Activated T-helper 2 cell treated with anti-CD3 and anti-CD28 coated beads, Interferon-gamma antibody, Interleukin-2, Interleukin-4, amounts not matched to agents 10 μg/mL and 5 μg/mL and 100 μg/mL, durations not matched to agents 14 hours and 24 hours and 36 hours (primary cell): ENCODE measurements at regions of chr22 and their contacts with region 1.

Region 1: DNA sequence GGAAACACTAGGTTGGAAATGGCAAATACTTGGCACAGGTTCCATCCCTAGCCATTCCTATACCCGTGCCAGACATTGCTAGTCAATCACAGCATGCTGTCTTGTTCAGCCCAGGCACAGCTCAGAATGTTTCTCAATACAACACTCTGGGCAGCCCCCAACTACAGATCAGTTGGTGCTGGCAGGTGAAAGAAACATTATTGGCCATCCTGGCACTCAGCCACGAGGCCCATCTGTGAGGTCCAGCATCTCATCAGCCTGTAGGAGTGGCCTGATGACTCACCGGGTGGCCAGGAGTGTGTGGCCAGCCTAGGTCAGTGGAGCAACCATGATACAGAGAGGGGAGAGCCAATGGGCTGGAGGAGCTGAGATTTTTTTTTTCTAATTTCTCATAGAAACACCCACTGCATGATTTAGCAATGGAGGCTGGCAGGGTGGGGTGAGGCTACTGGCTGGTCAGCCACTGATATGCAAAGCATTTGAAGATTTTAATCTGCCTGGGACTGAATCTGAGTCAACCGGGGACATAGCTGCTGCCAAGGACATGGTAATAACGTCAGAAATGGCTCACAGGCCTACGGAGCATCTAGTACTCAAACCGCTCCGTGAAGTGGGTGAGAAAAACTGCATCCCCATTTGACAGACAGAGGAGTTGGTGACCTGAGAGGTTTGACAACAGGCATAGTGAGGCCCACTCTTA is 5.4 kb downstream of the MYO18B start:
- DNase-seq: no peak
- H3K4me3 Mint-ChIP-seq: no peak overlapping the region
- H3K27ac Mint-ChIP-seq: peak overlapping the region; percentile 100
- H3K4me1 Mint-ChIP-seq: peaks cover 82% of the 10 kb centered on the region
- H3K27me3 Mint-ChIP-seq: no peaks in the 10 kb centered on the region

Region 2: DNA sequence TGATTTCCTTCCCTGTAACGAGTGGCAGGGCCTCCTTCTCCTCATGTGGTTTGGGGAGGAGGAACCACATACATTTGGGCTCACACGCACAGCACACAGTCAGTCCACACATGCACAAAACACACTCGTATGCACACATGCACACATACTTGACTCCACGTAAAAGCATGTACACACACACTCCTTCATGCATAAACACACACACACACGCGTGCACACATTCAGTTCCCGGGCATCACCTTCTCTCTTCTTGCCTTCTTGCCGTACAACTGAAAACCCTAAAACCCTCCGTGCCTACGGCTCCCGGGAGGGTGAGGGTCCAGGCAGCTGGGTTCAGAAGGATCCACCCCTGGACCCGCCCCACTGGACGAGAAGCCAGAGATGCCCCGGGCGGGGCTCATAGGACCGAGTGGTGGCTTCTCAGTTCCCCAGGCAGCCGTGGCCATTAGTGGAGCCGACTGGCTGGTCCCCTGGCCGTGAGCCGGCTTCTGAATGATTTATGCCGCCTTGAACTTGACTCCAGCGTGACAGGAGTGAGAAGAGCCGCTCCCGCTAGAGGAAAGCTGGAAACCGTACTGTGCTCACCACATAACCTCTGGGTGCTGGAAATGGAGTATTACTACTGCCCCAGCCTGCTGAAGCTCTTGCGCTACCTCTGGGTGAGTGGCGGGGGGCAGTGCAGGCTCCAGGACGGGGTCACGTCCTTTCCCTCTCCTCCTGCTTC is 677.5 kb before region 1 on chr22:
- intact Hi-C with region 1: loop called (anchors 5 kb)
- DNase-seq: peak; percentile 22
- H3K4me3 Mint-ChIP-seq: peak overlapping the region; percentile 84
- H3K27ac Mint-ChIP-seq: peak overlapping the region; percentile 95
- H3K4me1 Mint-ChIP-seq: peaks cover 65% of the 10 kb centered on the region
- H3K27me3 Mint-ChIP-seq: no peaks in the 10 kb centered on the region

Region 3: GRCh38 chr22:25554238-25554671 is 193.1 kb before region 1 on chr22:
- intact Hi-C with region 1: no loop called
- DNase-seq: no peak
- H3K4me3 Mint-ChIP-seq: no peak overlapping the region
- H3K27ac Mint-ChIP-seq: no peak overlapping the region
- H3K4me1 Mint-ChIP-seq: peaks cover 11% of the 10 kb centered on the region
- H3K27me3 Mint-ChIP-seq: no peaks in the 10 kb centered on the region

Region 4: DNA sequence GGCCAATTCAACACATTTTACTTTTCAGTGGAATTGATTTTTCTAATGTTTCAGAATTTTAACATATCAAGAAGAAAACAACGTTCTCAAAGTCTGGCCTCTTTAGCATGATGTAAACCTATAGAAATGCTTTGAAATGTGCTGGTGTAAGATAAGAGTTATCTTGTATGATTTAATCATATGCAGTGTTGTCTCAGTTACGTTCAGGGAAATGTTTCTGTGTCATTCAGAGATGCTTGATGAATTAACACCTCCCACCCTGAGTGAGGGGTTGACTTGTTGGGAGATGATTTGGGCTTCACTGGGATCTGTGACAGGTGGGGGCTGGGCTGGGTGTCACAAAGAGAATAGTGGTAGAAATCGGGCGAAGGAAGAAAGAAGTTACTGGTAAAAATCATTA is 21.2 kb before region 1 on chr22:
- intact Hi-C with region 1: loop called (anchors 1 kb)
- DNase-seq: no peak
- H3K4me3 Mint-ChIP-seq: peak overlapping the region; percentile 24
- H3K27ac Mint-ChIP-seq: peak overlapping the region; percentile 96
- H3K4me1 Mint-ChIP-seq: peaks cover 42% of the 10 kb centered on the region
- H3K27me3 Mint-ChIP-seq: no peaks in the 10 kb centered on the region

Region 5: DNA sequence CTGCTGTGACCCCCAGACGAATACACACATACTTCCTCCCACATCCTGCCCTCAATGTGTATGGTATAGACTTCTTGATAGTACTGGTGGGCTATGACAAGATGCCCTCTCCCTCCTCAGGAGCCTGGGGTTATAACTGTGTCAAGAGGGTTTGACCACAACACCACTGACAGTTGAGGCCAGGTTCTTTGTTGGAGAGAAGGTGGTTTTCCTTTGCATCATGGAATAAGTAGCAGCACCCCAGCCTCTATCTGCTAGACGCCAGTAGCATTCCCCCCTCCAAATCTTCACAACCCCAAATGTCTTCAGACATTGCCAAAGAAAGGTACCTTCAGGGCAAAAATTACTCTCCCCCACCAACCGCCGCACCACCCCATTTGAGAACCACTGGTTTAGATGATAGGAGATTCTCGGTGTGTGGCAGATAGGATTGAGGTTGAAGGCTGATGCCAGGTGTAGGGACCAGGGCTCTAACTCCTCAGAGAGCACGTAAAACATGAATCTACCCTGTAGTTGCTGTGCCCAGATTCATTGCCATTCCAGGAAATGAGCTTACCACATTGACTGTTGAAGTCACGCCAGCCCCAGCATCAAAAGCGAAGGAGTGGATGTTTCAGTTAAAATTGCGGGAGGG is 10.9 kb before region 1 on chr22:
- intact Hi-C with region 1: loop called (anchors 1 kb)
- DNase-seq: peak; percentile 74
- H3K4me3 Mint-ChIP-seq: peak overlapping the region; percentile 54
- H3K27ac Mint-ChIP-seq: peak overlapping the region; percentile 99
- H3K4me1 Mint-ChIP-seq: peaks cover 56% of the 10 kb centered on the region
- H3K27me3 Mint-ChIP-seq: no peaks in the 10 kb centered on the region

Region 6: GRCh38 chr22:25772288-25772687 is 24.9 kb after region 1 on chr22:
- intact Hi-C with region 1: loop called (anchors 2 kb)
- DNase-seq: no peak
- H3K4me3 Mint-ChIP-seq: no peak overlapping the region
- H3K27ac Mint-ChIP-seq: peak overlapping the region; percentile 84
- H3K4me1 Mint-ChIP-seq: peaks cover 30% of the 10 kb centered on the region
- H3K27me3 Mint-ChIP-seq: no peaks in the 10 kb centered on the region

Region 7: DNA sequence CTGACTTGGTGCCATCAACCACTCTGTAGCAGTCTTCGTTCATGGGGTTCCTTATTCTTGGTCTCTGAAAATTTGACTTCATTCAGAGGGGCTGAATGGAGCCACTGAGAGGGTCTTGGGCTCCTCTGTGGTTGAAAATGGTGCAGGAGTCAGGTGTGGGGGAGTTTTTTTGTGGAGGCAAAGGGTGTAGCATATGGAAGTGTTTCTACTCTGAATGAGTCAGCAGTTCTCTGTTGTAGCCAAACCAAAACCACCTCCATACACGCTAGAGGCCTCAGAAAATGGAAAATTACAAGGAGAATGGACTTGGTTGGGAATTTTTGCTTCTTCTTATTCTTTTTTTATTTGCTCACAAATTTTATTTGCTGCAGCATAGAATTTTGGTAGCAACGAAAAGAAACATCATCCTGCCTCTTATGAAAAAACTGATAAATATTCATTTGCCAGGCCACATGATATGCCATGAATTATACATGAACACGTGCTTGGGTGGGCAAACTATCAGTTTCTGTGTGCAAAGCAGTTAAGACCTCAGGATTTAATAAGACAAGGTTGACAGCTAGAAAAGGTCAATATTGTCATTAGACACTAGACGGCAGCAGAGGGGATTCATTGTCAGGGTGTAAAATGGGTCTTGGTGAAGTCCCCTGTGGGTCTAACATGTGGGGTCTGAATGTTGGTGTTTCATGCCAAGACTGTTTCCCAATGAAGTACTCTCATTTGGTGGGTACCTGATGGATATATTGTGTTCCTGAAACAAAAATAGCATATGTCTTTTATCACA is 106.3 kb after region 1 on chr22:
- intact Hi-C with region 1: no loop called
- DNase-seq: no peak
- H3K4me3 Mint-ChIP-seq: no peak overlapping the region
- H3K27ac Mint-ChIP-seq: no peak overlapping the region
- H3K4me1 Mint-ChIP-seq: peaks cover 5% of the 10 kb centered on the region
- H3K27me3 Mint-ChIP-seq: no peaks in the 10 kb centered on the region